Activated CD8-positive, alpha-beta T cell treated with anti-CD3 and anti-CD28 coated beads for 36 hours (primary cell): ENCODE measurements at regions of chr13 and their contacts with region 1.

Region 1: GRCh38 chr13:48078251-48078656 is 16.6 kb downstream of the MED4 start:
- DNase-seq: peak; percentile 57
- ATAC-seq: peak; percentile 97
- H3K4me3 Mint-ChIP-seq: no peak overlapping the region
- H3K27ac Mint-ChIP-seq: peak overlapping the region; percentile 68
- H3K4me1 Mint-ChIP-seq: peaks cover 9% of the 10 kb centered on the region
- H3K27me3 Mint-ChIP-seq: no peaks in the 10 kb centered on the region
- CTCF ChIP-seq: peak; percentile 7

Region 2: DNA sequence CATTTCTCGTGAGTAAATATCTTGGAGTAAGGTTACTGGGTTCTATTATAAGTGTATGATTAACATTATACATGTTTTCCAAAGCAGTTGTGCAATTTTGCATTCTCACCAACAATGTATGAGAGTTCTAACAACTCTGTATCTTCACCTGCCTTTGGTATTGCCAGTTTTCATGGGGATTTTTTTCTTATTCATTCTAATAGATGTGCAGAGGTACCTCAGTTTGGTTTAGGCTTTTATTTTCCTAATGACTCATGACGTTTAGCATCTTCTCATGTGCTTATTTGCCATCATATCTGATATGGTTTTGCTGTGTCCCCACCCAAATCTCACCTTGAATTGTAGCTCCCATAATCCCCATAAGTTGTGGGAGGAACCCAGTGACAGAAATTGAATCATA is 48.4 kb before region 1 on chr13:
- CTCF ChIA-PET with region 1: no interaction called
- POLR2A ChIA-PET with region 1: no interaction called
- intact Hi-C with region 1: no loop called
- DNase-seq: no peak
- ATAC-seq: peak; percentile 30
- H3K4me3 Mint-ChIP-seq: no peak overlapping the region
- H3K27ac Mint-ChIP-seq: no peak overlapping the region
- H3K4me1 Mint-ChIP-seq: peaks cover 13% of the 10 kb centered on the region
- H3K27me3 Mint-ChIP-seq: no peaks in the 10 kb centered on the region
- CTCF ChIP-seq: no peak

Region 3: GRCh38 chr13:48066310-48066989 is 11.8 kb before region 1 on chr13:
- CTCF ChIA-PET with region 1: interaction called, 10 read pairs
- POLR2A ChIA-PET with region 1: no interaction called
- intact Hi-C with region 1: no loop called
- DNase-seq: peak; percentile 78
- ATAC-seq: peak; percentile 99
- H3K4me3 Mint-ChIP-seq: no peak overlapping the region
- H3K27ac Mint-ChIP-seq: peak overlapping the region; percentile 71
- H3K4me1 Mint-ChIP-seq: peaks cover 15% of the 10 kb centered on the region
- H3K27me3 Mint-ChIP-seq: no peaks in the 10 kb centered on the region
- CTCF ChIP-seq: no peak